GM18951 (cell line): ENCODE measurements at regions of chr19 and their contacts with region 1.

Region 1: GRCh38 chr19:664913-665443 is 2.0 kb upstream of the RNF126 start:
- POLR2A ChIP-seq: no peak

Region 2: GRCh38 chr19:728011-728410 is 63.0 kb after region 1 on chr19:
- in situ Hi-C with region 1: loop called (anchors 5 kb)
- POLR2A ChIP-seq: no peak